Heart left ventricle (tissue), 16 donors: ENCODE measurements at regions of chr9 and their contacts with region 1.

Region 1: DNA sequence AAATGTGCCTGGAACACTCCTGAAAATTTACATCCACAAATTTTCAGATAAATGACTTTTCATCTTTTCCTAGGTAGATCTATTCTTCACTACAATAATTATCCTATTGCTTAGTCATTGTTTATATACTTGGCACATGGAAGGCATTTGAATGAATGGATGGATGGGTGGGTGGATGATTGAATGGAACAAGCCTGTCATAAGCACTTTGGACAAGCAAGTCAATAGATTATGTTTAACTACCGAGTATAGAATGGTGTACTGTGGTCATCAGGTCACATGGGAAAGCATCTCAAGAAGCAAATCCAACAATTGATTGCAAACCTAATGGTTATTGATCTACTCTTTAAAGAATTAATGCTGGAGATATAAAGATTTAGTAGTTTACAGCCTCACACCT is 114.4 kb upstream of the DMRTA1 start:
- DNase-seq: no peak
- ATAC-seq: no peak
- H3K4me3 ChIP-seq: no peak overlapping the region
- H3K27ac ChIP-seq: no peak overlapping the region
- H3K4me1 ChIP-seq: no peaks in the 10 kb centered on the region
- H3K27me3 ChIP-seq: no peaks in the 10 kb centered on the region
- CTCF ChIP-seq: no peak
- POLR2A ChIP-seq: no peak

Region 2: DNA sequence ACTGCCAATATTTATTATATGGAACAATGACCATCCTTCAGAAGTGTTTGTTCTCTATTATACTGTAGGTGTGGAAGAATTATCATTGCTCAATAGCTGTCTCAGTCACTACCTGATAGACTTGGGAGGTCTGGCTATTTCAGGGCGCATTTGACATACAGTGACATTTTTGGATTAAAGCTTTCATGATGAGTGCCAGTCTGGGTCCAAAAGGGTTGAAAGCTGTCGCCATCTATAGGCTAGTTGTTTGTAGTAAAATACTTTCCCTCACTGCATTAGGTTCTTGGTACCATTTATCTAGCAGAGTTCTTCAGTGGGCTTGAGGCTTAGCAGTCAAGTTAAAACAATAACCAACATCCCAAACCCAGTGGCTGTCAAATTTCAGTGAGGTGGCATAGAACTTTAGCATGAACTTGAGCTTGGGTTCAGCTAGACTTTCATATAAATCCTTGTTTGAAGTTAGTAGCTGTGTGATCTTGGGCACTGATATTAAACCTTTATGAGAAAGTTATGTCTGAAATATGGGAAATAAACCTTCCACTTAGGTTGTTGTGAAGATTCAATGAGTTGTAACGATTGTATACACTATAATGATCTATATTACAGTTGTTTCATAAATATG is 212.6 kb before region 1 on chr9:
- intact Hi-C with region 1: no loop called
- DNase-seq: peak in 1 of 5 donors; percentile 7
- ATAC-seq: peak in 3 of 4 donors; percentile 63 to 79 (median 79)
- H3K4me3 ChIP-seq: no peak overlapping the region
- H3K27ac ChIP-seq: no peak overlapping the region
- H3K4me1 ChIP-seq: peaks cover 0 to 5% (median 0%) of the 10 kb centered on the region in 12 donors
- H3K27me3 ChIP-seq: peaks cover 0 to 3% (median 0%) of the 10 kb centered on the region in 9 donors
- CTCF ChIP-seq: peak; percentile 13 to 52 (median 31)
- POLR2A ChIP-seq: no peak

Region 3: GRCh38 chr9:22228542-22228941 is 103.7 kb before region 1 on chr9:
- intact Hi-C with region 1: no loop called
- DNase-seq: no peak
- ATAC-seq: no peak
- H3K4me3 ChIP-seq: no peak overlapping the region
- H3K27ac ChIP-seq: no peak overlapping the region
- H3K4me1 ChIP-seq: no peaks in the 10 kb centered on the region
- H3K27me3 ChIP-seq: no peaks in the 10 kb centered on the region
- CTCF ChIP-seq: peak in 4 of 12 donors; percentile 10 to 34 (median 20)
- POLR2A ChIP-seq: no peak

Region 4: GRCh38 chr9:22383720-22384119 is 51.5 kb after region 1 on chr9:
- intact Hi-C with region 1: loop called in 1 of 10 experiments (anchors 10 kb)
- DNase-seq: no peak
- ATAC-seq: no peak
- H3K4me3 ChIP-seq: no peak overlapping the region
- H3K27ac ChIP-seq: no peak overlapping the region
- H3K4me1 ChIP-seq: no peaks in the 10 kb centered on the region
- H3K27me3 ChIP-seq: peaks cover 0 to 6% (median 0%) of the 10 kb centered on the region in 9 donors
- CTCF ChIP-seq: no peak
- POLR2A ChIP-seq: no peak

Region 5: GRCh38 chr9:23220957-23221356 is 888.8 kb after region 1 on chr9:
- intact Hi-C with region 1: no loop called
- DNase-seq: no peak
- ATAC-seq: no peak
- H3K4me3 ChIP-seq: no peak overlapping the region
- H3K27ac ChIP-seq: no peak overlapping the region
- H3K4me1 ChIP-seq: no peaks in the 10 kb centered on the region
- H3K27me3 ChIP-seq: no peaks in the 10 kb centered on the region
- CTCF ChIP-seq: no peak
- POLR2A ChIP-seq: no peak